ENCODE measurements at regions of chr2 and their contacts with region 1.

Region 1: DNA sequence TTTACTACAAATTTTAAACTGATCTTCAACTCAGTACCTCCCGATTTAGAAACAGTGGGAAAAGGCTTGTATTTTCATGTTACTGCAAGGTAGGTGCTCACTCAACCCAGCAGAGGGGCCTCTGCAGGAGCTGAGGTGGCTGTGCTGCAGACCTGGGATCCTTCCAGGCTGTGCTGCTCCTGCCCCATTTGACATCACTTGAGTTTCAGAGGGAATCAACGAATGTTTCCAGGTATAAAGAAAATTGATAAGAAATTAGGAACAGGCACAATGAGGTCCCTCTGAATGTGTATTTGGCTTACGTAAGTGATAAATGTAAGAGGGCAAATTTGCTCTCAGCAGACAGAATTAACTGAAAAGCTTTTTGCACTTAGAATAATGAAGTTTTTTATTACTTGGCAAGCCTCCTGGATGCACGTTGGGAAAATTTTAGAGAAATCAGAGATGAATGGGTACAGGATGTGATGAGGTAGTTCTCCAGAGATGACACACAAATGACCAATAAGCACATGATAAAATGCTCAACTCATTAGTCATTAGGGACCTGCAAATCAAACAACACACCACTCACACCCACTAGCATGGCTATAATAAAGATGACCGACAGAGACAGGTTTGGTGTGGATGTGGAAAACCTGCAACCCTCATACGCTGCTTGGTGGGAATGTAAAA is 114.0 kb downstream of the NOL10 start:
- DNase-seq: no peak
- H3K4me3 Mint-ChIP-seq: no peak overlapping the region
- H3K27ac Mint-ChIP-seq: no peak overlapping the region
- H3K4me1 Mint-ChIP-seq: peaks cover 31% of the 10 kb centered on the region
- H3K27me3 Mint-ChIP-seq: no peaks in the 10 kb centered on the region

Region 2: DNA sequence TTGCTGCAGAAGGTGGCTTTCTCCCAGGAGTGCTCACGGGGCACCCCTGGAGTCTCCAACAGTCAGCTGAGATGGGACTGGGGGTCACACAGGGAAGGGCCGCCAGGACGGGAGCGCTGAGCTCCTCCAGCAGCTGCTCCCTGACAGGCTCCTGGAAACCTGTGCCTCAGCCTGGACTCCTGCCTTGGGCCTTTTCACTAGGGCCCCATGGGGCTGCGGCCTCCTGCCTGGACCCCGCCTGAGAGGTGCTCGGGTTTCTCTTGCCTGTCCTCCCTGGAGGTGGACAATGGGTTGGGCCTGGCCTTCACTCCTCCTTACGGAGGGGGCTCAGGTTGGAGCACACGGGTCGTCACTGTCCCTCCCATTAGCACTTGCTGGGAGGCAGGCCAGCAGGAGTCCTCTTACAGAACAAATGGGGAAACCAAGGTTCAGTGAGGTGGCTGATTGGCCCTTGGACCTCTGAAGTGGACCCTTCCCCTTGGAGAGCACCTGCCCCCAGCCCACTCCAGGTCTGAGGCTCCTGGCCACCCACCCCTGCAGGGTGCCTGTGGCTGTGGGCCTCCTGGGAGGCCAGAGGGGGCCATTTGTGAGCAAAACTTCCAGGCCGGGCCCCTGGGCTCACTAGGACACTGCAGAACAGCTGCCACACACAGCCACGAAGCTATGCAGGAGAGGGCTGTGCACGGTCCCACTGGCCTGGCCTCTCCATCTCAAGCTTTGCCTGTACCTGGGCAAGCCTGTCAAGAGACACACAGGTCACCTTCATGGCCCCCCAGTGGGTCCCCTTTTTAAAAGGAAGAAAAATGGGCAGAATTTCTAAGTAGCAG is 70.5 kb before region 1 on chr2:
- intact Hi-C with region 1: no loop called
- DNase-seq: no peak
- H3K4me3 Mint-ChIP-seq: no peak overlapping the region
- H3K27ac Mint-ChIP-seq: no peak overlapping the region
- H3K4me1 Mint-ChIP-seq: no peaks in the 10 kb centered on the region
- H3K27me3 Mint-ChIP-seq: peaks cover 11% of the 10 kb centered on the region

Region 3: GRCh38 chr2:10538224-10538894 is 37.4 kb before region 1 on chr2:
- intact Hi-C with region 1: no loop called
- DNase-seq: no peak
- H3K4me3 Mint-ChIP-seq: peak overlapping the region; percentile 26
- H3K27ac Mint-ChIP-seq: peak overlapping the region; percentile 63
- H3K4me1 Mint-ChIP-seq: peaks cover 28% of the 10 kb centered on the region
- H3K27me3 Mint-ChIP-seq: peaks cover 7% of the 10 kb centered on the region

Region 4: DNA sequence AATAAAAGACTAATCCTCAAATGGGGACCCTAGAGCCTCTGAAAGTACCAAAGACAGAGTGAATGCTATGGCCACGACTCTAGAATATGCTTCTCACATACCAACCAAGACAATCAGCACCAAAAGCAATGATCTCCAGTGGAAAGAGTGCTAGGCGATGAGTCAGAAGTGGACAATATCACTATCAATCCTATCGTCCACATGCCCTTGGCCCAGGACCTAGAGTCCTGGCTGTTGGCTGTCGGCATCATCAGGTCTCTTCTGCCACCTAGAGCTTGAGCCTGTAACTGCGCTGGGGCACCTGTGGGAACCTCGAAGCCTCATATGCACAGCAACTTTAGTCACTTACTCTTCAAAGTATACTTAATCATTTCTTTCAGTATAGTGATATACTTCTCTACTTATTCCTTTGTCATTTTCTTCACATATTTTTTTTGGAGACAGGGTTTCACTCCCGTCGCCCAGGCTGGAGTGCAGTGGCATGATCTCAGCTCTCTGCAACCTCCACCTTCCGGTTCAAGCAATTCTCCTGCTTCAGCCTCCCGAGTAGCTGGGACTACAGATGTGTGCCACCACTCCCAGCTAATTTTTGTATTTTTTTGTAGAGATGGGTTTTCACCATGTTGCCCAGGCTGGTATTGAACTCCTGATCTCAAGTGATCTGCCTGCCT is 84.3 kb after region 1 on chr2:
- intact Hi-C with region 1: loop called (anchors 10 kb)
- DNase-seq: peak; percentile 23
- H3K4me3 Mint-ChIP-seq: no peak overlapping the region
- H3K27ac Mint-ChIP-seq: no peak overlapping the region
- H3K4me1 Mint-ChIP-seq: peaks cover 20% of the 10 kb centered on the region
- H3K27me3 Mint-ChIP-seq: no peaks in the 10 kb centered on the region

Measured in activated T-helper 1 cell treated with anti-CD3 and anti-CD28 coated beads, Interleukin-12 subunit alpha, Interleukin-12 subunit beta, Interleukin-2, Interleukin-4 antibody, amounts not matched to agents 30 ng/mL and 10 ng/mL and 1 ng/mL, durations not matched to agents 14 hours and 24 hours and 36 hours (primary cell).